B cell (primary cell): ENCODE measurements at regions of chr3 and their contacts with region 1.

Region 1: GRCh38 chr3:16940769-16941700 is 56.3 kb downstream of the PLCL2 start:
- DNase-seq: no peak
- ATAC-seq: no peak
- H3K4me3 ChIP-seq: no peak overlapping the region
- H3K4me3 Mint-ChIP-seq: no peak overlapping the region
- H3K27ac ChIP-seq: no peak overlapping the region
- H3K27ac Mint-ChIP-seq: no peak overlapping the region
- H3K4me1 ChIP-seq: peaks cover 23 to 50% of the 10 kb centered on the region in 2 donors
- H3K4me1 Mint-ChIP-seq: peaks cover 72% of the 10 kb centered on the region
- H3K27me3 ChIP-seq: no peaks in the 10 kb centered on the region
- H3K27me3 Mint-ChIP-seq: no peaks in the 10 kb centered on the region
- CTCF ChIP-seq: no peak

Region 2: DNA sequence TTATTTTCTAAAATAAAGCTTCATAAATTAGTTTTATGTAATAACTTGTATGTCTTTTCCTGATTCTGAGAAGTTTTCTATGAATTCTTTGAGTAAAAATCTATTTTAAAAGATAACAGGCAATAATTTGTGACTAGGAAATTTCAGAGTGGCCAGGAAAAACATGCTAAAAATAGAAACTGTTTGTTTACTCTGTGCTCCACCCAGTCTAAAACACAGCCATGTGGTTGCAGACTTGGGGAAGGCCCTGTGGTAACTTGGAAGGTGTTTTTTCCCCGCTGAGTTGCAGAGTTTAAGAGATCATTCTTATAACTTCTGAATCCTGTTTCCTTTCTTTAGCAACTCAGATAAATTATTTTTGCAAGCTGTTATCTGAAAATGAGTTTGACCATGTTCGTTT is 34.4 kb before region 1 on chr3:
- CTCF ChIA-PET with region 1: no interaction called
- POLR2A ChIA-PET with region 1: no interaction called
- intact Hi-C with region 1: loop called (anchors 5 kb)
- DNase-seq: no peak
- ATAC-seq: no peak
- H3K4me3 ChIP-seq: peak overlapping the region in 1 of 5 experiments; percentile 23
- H3K4me3 Mint-ChIP-seq: no peak overlapping the region
- H3K27ac ChIP-seq: peak overlapping the region in 1 of 2 donors; percentile 62
- H3K27ac Mint-ChIP-seq: no peak overlapping the region
- H3K4me1 ChIP-seq: peaks cover 73 to 76% of the 10 kb centered on the region in 2 donors
- H3K4me1 Mint-ChIP-seq: peaks cover 77% of the 10 kb centered on the region
- H3K27me3 ChIP-seq: no peaks in the 10 kb centered on the region
- H3K27me3 Mint-ChIP-seq: no peaks in the 10 kb centered on the region
- CTCF ChIP-seq: no peak

Region 3: DNA sequence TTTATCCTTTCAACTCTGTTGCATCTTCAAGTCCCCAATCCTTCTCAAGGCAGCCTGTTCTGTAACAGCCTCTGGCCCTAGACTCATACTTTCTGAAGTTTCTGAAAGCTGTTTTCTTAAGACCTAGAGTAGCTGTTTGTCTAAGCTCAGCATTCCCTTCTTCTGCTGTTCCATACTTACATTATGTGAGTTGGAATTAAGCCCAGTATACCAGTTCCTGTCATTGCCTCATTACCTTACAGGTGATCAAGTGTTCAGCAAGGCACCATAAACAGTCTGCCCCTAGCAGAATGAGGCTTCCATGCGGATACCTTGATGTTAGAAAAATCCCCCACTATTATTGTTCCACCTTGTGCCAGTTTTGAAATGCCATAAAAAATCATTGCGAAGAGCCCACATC is 124.3 kb after region 1 on chr3:
- CTCF ChIA-PET with region 1: no interaction called
- POLR2A ChIA-PET with region 1: no interaction called
- intact Hi-C with region 1: no loop called
- DNase-seq: no peak
- ATAC-seq: no peak
- H3K4me3 ChIP-seq: no peak overlapping the region
- H3K4me3 Mint-ChIP-seq: no peak overlapping the region
- H3K27ac ChIP-seq: no peak overlapping the region
- H3K27ac Mint-ChIP-seq: peak overlapping the region; percentile 21
- H3K4me1 ChIP-seq: no peaks in the 10 kb centered on the region
- H3K4me1 Mint-ChIP-seq: no peaks in the 10 kb centered on the region
- H3K27me3 ChIP-seq: no peaks in the 10 kb centered on the region
- H3K27me3 Mint-ChIP-seq: no peaks in the 10 kb centered on the region
- CTCF ChIP-seq: no peak